Breast epithelium (tissue), 4 donors: ENCODE measurements at regions of chr14 and their contacts with region 1.

Region 1: GRCh38 chr14:104460791-104461651 is 118.5 kb upstream of the C14orf180 start:
- DNase-seq: peak in 1 of 2 donors; percentile 40
- H3K4me3 ChIP-seq: peak overlapping the region in 2 of 3 donors; percentile 29 to 54
- H3K27ac ChIP-seq: no peak overlapping the region
- H3K4me1 ChIP-seq: peaks cover 0 to 6% of the 10 kb centered on the region in 2 donors
- H3K27me3 ChIP-seq: peaks cover 4 to 31% of the 10 kb centered on the region in 2 donors
- CTCF ChIP-seq: no peak
- POLR2A ChIP-seq: no peak

Region 2: DNA sequence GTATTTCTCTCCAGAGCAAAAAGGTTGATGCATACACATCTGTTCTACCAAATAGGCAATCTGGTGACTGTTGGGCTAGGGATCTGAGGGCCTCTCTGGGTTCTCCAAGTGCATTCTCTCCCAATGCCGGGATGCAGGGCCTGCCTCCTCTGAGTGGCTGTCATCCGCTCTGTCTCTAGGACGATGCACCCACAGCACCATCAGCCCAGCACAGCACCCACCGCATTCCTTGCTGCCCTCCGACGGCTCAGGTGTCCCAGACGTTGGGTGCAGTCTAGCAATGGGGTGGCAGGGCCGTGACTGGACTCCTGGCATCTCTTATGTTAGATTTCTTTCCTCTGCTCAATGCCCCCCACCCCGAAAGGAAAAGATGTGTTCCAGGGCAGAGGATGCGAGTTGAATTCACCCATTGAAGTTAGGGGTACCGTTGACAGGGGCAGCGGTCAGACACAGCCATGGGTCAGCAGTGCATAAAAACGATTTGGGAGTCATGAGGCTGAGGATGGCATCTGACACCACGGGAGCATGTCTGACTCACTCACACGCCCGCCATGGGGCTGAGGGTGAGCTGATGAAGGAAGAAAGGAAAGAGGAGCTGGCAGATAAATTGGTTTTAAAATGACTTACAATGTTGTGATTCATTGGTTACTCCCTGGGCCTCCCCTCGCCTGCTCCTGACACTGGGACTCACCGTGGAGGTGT is 25.4 kb after region 1 on chr14:
- intact Hi-C with region 1: loop called (anchors 1 kb)
- DNase-seq: no peak
- H3K4me3 ChIP-seq: no peak overlapping the region
- H3K27ac ChIP-seq: no peak overlapping the region
- H3K4me1 ChIP-seq: no peaks in the 10 kb centered on the region
- H3K27me3 ChIP-seq: peaks cover 0 to 17% of the 10 kb centered on the region in 2 donors
- CTCF ChIP-seq: no peak
- POLR2A ChIP-seq: no peak

Region 3: DNA sequence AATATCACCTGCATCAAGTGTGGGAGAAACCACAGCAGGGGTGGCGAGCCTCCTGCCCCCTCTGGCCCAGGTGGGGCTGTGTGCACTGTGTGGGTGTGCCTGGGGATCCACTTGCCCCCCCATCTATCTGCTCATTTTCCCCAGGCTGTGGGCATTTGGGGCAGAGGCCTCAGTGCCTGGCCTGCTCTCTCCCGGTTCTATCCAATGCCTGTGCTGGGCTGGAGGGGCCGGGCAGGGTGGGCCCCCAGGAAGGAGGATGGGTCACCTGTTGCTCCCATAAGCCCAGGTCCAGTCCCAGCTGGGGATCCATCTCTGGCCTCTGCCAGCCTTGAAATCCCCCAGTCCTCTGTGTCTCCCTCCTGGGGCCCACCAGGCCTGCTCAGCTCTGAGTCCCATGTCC is 1171.0 kb after region 1 on chr14:
- intact Hi-C with region 1: no loop called
- DNase-seq: no peak
- H3K4me3 ChIP-seq: no peak overlapping the region
- H3K27ac ChIP-seq: no peak overlapping the region
- H3K4me1 ChIP-seq: no peaks in the 10 kb centered on the region
- H3K27me3 ChIP-seq: peaks cover 0 to 6% of the 10 kb centered on the region in 2 donors
- CTCF ChIP-seq: no peak
- POLR2A ChIP-seq: no peak